H1 (cell line): ENCODE measurements at regions of chr5 and their contacts with region 1.

Region 1: GRCh38 chr5:133868946-133869518 is 99.4 kb downstream of the C5orf15 start:
- DNase-seq: peak in 1 of 2 experiments; percentile 77
- H3K4me3 ChIP-seq: no peak overlapping the region
- H3K27ac ChIP-seq: no peak overlapping the region
- H3K4me1 ChIP-seq: peaks cover 0 to 3% (median 0%) of the 10 kb centered on the region in 4 experiments; a peak in 3 of 7 replicates
- H3K27me3 ChIP-seq: no peaks in the 10 kb centered on the region
- CTCF ChIP-seq: peak; percentile 63 to 82 (median 73)
- EP300 ChIP-seq: no peak
- POLR2A ChIP-seq: no peak
- RAD21 ChIP-seq: peak; percentile 72 to 79

Region 2: DNA sequence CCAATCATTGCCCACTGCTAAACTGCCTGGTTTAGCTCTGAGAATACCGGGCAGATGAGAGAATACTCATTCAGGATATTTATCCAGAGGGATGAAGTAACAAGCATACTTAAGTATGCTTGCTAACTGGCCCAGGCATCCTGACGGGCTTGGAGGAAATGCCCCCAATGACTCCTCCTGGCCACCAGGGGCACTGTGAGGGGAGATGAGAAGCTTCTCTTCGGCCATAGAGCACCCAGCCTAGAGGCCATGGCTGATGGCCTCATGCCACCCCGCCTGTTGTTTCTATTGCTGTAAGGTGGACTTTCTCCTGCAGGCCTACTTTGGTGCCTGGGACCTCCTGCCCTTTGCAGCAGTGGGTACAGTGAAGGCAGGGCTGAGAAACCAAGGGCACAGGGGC is 122.2 kb before region 1 on chr5:
- CTCF ChIA-PET with region 1: interaction called, 63 read pairs
- POLR2A ChIA-PET with region 1: no interaction called
- DNase-seq: peak in 1 of 2 experiments; percentile 67
- H3K4me3 ChIP-seq: no peak overlapping the region
- H3K27ac ChIP-seq: no peak overlapping the region
- H3K4me1 ChIP-seq: no peaks in the 10 kb centered on the region
- H3K27me3 ChIP-seq: no peaks in the 10 kb centered on the region
- CTCF ChIP-seq: peak; percentile 43 to 68 (median 66)
- EP300 ChIP-seq: no peak
- POLR2A ChIP-seq: no peak
- RAD21 ChIP-seq: no peak; a peak in 1 of 4 replicates

Region 3: GRCh38 chr5:133806847-133807747 is 61.9 kb before region 1 on chr5:
- CTCF ChIA-PET with region 1: interaction called, 12 read pairs
- POLR2A ChIA-PET with region 1: no interaction called
- DNase-seq: no peak
- H3K4me3 ChIP-seq: no peak overlapping the region
- H3K27ac ChIP-seq: no peak overlapping the region
- H3K4me1 ChIP-seq: no peaks in the 10 kb centered on the region
- H3K27me3 ChIP-seq: no peaks in the 10 kb centered on the region
- CTCF ChIP-seq: no peak
- EP300 ChIP-seq: no peak
- POLR2A ChIP-seq: no peak
- RAD21 ChIP-seq: no peak

Region 4: DNA sequence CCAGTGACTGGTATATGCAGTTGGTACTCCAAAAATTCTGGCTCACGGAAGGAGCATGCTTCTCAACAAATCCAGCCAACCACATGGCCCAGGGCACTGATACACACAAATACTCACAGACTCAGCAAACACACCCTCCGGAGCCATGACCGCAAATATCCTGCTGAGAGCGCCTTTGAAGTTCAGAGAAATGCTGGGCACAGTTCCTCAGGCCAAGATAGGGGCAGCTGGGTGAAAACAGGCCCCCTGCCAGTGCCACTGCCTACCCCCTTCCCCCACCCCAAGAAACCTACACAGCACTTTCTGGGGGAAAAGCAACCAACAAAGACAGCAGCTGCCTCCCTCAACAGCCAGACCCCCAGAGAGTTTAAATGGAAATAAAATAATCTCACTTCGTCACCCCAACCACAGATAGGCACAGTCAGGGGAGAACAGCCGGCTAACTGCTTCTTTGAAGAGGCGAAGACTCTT is 20.7 kb before region 1 on chr5:
- CTCF ChIA-PET with region 1: interaction called, 23 read pairs
- POLR2A ChIA-PET with region 1: no interaction called
- DNase-seq: no peak
- H3K4me3 ChIP-seq: no peak overlapping the region
- H3K27ac ChIP-seq: no peak overlapping the region
- H3K4me1 ChIP-seq: no peaks in the 10 kb centered on the region
- H3K27me3 ChIP-seq: no peaks in the 10 kb centered on the region
- CTCF ChIP-seq: no peak
- EP300 ChIP-seq: no peak
- POLR2A ChIP-seq: no peak
- RAD21 ChIP-seq: no peak

Region 5: GRCh38 chr5:133930061-133930812 is 61.2 kb after region 1 on chr5:
- CTCF ChIA-PET with region 1: interaction called, 10 read pairs
- POLR2A ChIA-PET with region 1: no interaction called
- DNase-seq: no peak
- H3K4me3 ChIP-seq: no peak overlapping the region
- H3K27ac ChIP-seq: no peak overlapping the region
- H3K4me1 ChIP-seq: no peaks in the 10 kb centered on the region; a peak in 3 of 7 replicates
- H3K27me3 ChIP-seq: no peaks in the 10 kb centered on the region; a peak in 1 of 7 replicates
- CTCF ChIP-seq: no peak
- EP300 ChIP-seq: no peak
- POLR2A ChIP-seq: no peak
- RAD21 ChIP-seq: no peak